Right lobe of liver (tissue), 6 donors: ENCODE measurements at regions of chr6 and their contacts with region 1.

Region 1: DNA sequence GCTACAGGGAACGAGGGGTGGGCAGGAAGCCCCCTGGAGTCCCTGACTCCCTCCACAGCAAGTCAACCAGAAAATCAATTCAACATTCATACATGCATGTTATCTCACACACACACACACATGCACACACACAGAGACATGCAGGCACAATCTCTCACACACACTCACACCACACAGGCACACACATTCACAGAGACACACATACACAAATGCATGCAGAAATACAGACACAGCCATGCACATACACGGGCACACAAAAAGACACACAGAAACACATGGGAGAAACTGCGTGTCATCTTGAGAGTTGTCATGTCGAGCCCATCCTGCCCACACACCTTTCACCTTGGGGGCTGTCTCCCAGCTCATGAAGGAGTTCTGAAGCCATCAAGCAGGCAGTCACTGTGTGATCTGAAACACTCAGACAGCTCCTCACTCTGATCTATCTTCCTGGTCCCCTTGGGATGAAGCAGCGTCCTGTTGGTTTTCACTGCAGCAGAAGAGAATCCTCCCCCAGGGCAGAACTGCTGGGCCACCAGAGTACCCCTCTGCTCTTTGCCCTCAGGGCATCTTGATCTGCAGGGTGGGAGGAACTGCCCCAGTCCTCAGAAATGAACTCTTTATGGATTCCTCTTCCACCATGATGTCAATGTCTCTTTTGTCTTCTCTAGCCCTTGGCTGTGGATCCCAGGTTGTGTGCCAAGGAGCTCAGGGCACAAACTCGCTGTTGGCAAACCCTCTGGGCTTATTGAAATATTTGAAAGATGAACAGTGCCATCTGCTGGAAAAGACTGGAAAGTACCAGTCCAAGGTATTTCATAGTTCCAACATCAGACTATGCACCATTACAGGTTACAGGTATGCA is 8.8 kb downstream of the RAET1L start:
- DNase-seq: peak in 2 of 3 donors; percentile 72 to 79
- ATAC-seq: peak; percentile 94 to 98 (median 96)
- H3K4me3 ChIP-seq: no peak overlapping the region
- H3K27ac ChIP-seq: no peak overlapping the region
- H3K4me1 ChIP-seq: no peaks in the 10 kb centered on the region
- H3K27me3 ChIP-seq: peaks cover 0 to 12% of the 10 kb centered on the region in 2 donors
- CTCF ChIP-seq: peak; percentile 62 to 89 (median 76)
- POLR2A ChIP-seq: no peak

Region 2: DNA sequence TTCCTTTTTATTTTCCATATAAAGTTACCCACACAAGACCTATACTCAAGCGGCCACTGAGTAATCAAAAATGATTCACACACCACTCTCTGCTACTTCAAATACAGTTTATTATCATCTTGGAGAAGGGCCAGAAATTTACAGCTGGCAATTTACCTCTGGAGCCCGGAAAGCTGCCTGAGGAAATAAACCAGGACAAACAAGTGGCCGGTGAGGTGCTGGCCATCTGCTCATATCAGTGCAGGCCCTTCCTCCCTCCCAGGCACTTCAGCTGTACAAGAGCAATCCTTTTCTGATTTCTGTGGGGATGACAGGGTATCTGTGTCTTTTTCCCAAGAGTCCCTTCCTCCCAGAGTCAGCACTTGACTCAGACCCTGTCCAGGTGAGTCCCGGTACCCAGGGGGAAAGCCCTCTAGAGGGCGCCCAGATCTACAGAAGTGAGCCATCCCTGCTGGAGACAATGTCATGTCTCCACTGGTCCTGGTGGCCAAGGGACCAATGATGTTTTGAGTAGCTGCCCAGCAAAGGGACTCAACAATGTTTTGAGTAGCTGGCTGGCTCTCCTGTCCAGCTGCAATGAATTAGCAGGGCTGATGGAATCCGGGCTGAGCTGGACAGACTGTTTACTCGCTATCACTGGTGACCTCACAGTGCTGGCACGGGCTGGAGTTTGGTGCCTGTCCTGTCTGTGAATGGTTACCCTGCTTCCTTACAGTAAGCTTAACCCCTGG is 176.0 kb before region 1 on chr6:
- intact Hi-C with region 1: no loop called
- DNase-seq: peak; percentile 72 to 85 (median 77)
- ATAC-seq: peak; percentile 96 to 98 (median 96)
- H3K4me3 ChIP-seq: no peak overlapping the region
- H3K27ac ChIP-seq: peak overlapping the region in 1 of 3 donors; percentile 6
- H3K4me1 ChIP-seq: peaks cover 0 to 10% (median 0%) of the 10 kb centered on the region in 4 donors
- H3K27me3 ChIP-seq: no peaks in the 10 kb centered on the region
- CTCF ChIP-seq: peak; percentile 57 to 79 (median 66)
- POLR2A ChIP-seq: no peak

Region 3: GRCh38 chr6:149934249-149935156 is 82.1 kb before region 1 on chr6:
- intact Hi-C with region 1: loop called (anchors 5 kb)
- DNase-seq: peak in 1 of 3 donors; percentile 63
- ATAC-seq: peak; percentile 84 to 88 (median 84)
- H3K4me3 ChIP-seq: no peak overlapping the region
- H3K27ac ChIP-seq: no peak overlapping the region
- H3K4me1 ChIP-seq: peaks cover 0 to 10% (median 4%) of the 10 kb centered on the region in 4 donors
- H3K27me3 ChIP-seq: peaks cover 2 to 28% of the 10 kb centered on the region in 2 donors
- CTCF ChIP-seq: peak; percentile 81 to 93 (median 84)
- POLR2A ChIP-seq: no peak